Panc1 (cell line): ENCODE measurements at regions of chr1 and their contacts with region 1.

Region 1: GRCh38 chr1:151098126-151098525 is 27.6 kb downstream of the GABPB2 start:
- DNase-seq: no peak
- ATAC-seq: no peak
- H3K4me3 ChIP-seq: no peak overlapping the region
- H3K27ac ChIP-seq: no peak overlapping the region
- H3K4me1 ChIP-seq: no peaks in the 10 kb centered on the region
- H3K27me3 ChIP-seq: no peaks in the 10 kb centered on the region
- CTCF ChIP-seq: no peak

Region 2: GRCh38 chr1:150961799-150962198 is 136.3 kb before region 1 on chr1:
- CTCF ChIA-PET with region 1: no interaction called
- POLR2A ChIA-PET with region 1: no interaction called
- in situ Hi-C with region 1: no loop called
- intact Hi-C with region 1: no loop called
- DNase-seq: no peak
- ATAC-seq: no peak
- H3K4me3 ChIP-seq: no peak overlapping the region
- H3K27ac ChIP-seq: no peak overlapping the region
- H3K4me1 ChIP-seq: peaks cover 5% of the 10 kb centered on the region; the same call in 1 of the 2 replicates
- H3K27me3 ChIP-seq: no peaks in the 10 kb centered on the region
- CTCF ChIP-seq: no peak

Region 3: DNA sequence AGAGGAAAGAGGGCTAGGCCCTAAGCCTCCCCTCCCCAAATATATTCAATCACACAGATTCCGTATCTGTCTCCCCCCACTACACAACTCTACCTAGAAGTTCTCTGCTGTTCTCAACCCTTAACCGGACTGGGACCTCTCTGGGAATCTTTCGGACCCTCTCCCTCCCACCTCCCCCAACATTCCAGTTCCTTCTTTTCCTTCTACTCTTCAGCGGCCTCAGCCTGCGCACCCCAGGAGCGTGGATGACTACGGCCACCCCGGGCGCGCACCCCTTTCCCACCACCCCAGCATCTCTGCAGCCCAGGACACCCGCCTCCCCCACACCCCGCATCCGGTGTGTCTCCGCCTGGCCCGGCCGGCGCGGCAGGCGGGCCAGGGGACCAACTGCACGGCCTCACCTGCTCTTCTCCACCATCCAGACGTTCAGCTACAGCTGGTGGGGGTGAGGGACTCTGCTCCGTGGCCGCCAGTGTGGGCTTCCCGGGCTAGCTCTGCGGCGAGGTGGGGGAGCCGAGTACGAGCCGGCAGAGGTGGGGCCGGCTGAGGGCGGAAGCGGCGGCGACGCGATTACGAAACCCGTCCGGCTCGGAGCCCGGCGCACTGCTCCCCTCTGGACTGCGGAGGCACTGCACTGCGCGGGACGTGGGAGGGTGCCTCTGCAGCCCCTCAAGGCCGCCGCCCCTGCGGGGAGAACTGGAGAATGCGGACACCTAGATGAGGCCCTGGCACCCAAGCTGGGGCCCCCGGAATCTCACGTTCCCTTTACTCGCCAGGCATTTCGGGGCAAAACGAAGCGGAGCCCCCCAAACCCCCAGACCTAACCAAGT is 38.8 kb before region 1 on chr1 and contains the start of gene CDC42SE1:
- CTCF ChIA-PET with region 1: no interaction called
- POLR2A ChIA-PET with region 1: no interaction called
- in situ Hi-C with region 1: no loop called
- intact Hi-C with region 1: no loop called
- DNase-seq: no peak
- ATAC-seq: peak; percentile 96
- H3K4me3 ChIP-seq: peak within 1 kb of the TSS; percentile 94 to 99
- H3K27ac ChIP-seq: peak within 1 kb of the TSS; percentile 97
- H3K4me1 ChIP-seq: peaks cover 21% of the 10 kb centered on the region
- H3K27me3 ChIP-seq: no peaks in the 10 kb centered on the region
- CTCF ChIP-seq: peak; percentile 90
- total RNA-seq, gene CDC42SE1: 81.2 TPM

Region 4: GRCh38 chr1:151113877-151114276 is 15.8 kb after region 1 on chr1:
- CTCF ChIA-PET with region 1: interaction called, 10 read pairs
- POLR2A ChIA-PET with region 1: no interaction called
- in situ Hi-C with region 1: no loop called
- intact Hi-C with region 1: no loop called
- DNase-seq: no peak
- ATAC-seq: no peak
- H3K4me3 ChIP-seq: no peak overlapping the region
- H3K27ac ChIP-seq: no peak overlapping the region
- H3K4me1 ChIP-seq: no peaks in the 10 kb centered on the region
- H3K27me3 ChIP-seq: no peaks in the 10 kb centered on the region
- CTCF ChIP-seq: no peak

Region 5: GRCh38 chr1:151130987-151131586 is 33.0 kb after region 1 on chr1:
- CTCF ChIA-PET with region 1: no interaction called
- POLR2A ChIA-PET with region 1: no interaction called
- in situ Hi-C with region 1: loop called (anchors 5 kb)
- intact Hi-C with region 1: no loop called
- DNase-seq: no peak
- ATAC-seq: no peak
- H3K4me3 ChIP-seq: no peak overlapping the region
- H3K27ac ChIP-seq: no peak overlapping the region
- H3K4me1 ChIP-seq: no peaks in the 10 kb centered on the region
- H3K27me3 ChIP-seq: no peaks in the 10 kb centered on the region
- CTCF ChIP-seq: no peak

Region 6: GRCh38 chr1:151156515-151156819 is 58.3 kb after region 1 on chr1 and contains the start of gene TNFAIP8L2:
- CTCF ChIA-PET with region 1: interaction called, 70 read pairs
- POLR2A ChIA-PET with region 1: interaction called, 12 read pairs
- in situ Hi-C with region 1: no loop called
- intact Hi-C with region 1: loop called (anchors 1 kb)
- DNase-seq: no peak
- ATAC-seq: peak; percentile 87
- H3K4me3 ChIP-seq: no peak within 1 kb of the TSS
- H3K27ac ChIP-seq: no peak within 1 kb of the TSS
- H3K4me1 ChIP-seq: no peaks in the 10 kb centered on the region
- H3K27me3 ChIP-seq: no peaks in the 10 kb centered on the region
- CTCF ChIP-seq: no peak
- total RNA-seq, gene TNFAIP8L2: not detected

Region 7: DNA sequence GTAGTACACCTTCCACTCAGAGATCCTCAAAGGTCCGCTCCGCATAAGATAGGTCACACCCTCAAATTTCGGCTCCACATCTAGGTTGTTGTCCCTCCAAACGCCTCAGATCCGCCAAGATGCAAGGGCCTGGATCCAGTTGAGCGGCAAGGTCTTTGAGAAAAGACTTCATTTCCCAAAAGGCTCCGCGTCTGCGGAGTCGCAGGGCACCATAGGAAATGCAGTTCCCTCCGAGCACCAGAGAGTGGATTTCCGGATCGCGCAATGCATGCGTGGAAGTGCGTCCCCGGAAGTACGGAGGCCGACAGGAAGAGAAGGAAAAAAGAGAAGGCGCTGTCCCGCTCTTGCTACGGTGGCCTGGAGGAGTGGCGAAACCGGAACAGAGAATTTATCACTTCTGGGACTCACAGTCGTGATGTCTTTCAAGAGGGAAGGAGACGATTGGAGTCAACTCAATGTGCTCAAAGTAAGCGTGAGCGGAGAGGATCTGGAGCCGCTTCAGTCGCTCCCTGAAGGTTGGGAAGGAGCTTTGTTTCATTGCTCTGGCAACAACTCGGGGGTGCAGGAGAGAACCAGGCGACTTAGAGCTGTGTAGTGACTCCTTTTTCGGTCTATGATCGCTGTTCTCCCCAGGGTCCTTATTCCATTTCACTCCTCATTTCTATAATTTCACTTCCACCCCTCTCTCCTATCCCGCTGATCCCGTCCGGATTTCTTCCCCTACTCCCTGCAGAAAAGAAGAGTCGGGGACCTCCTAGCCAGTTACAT is 67.8 kb after region 1 on chr1 and contains the starts of genes LYSMD1 and SCNM1:
- CTCF ChIA-PET with region 1: interaction called, 5 read pairs
- POLR2A ChIA-PET with region 1: interaction called, 10 read pairs
- in situ Hi-C with region 1: no loop called
- intact Hi-C with region 1: no loop called
- DNase-seq: peak; percentile 92
- ATAC-seq: peak; percentile 98
- H3K4me3 ChIP-seq: peak within 1 kb of the TSS; percentile 83 to 92
- H3K27ac ChIP-seq: peak within 1 kb of the TSS; percentile 99
- H3K4me1 ChIP-seq: peaks cover 16% of the 10 kb centered on the region
- H3K27me3 ChIP-seq: no peaks in the 10 kb centered on the region
- CTCF ChIP-seq: no peak
- total RNA-seq, gene LYSMD1: 5.1 TPM
- total RNA-seq, gene SCNM1: 36.5 TPM

Region 8: GRCh38 chr1:151254217-151255213 is 156.4 kb after region 1 on chr1 and contains the start of gene PSMD4:
- CTCF ChIA-PET with region 1: interaction called, 10 read pairs
- POLR2A ChIA-PET with region 1: no interaction called
- in situ Hi-C with region 1: no loop called
- intact Hi-C with region 1: no loop called
- DNase-seq: peak; percentile 93
- ATAC-seq: peak; percentile 98
- H3K4me3 ChIP-seq: peak within 1 kb of the TSS; percentile 60 to 68
- H3K27ac ChIP-seq: peak within 1 kb of the TSS; percentile 84
- H3K4me1 ChIP-seq: peaks cover 3% of the 10 kb centered on the region; the same call in 1 of the 2 replicates
- H3K27me3 ChIP-seq: no peaks in the 10 kb centered on the region
- CTCF ChIP-seq: no peak
- total RNA-seq, gene PSMD4: 256 TPM